CD4-positive, alpha-beta T cell (primary cell): ENCODE measurements at regions of chr13 and their contacts with region 1.

Region 1: GRCh38 chr13:101757446-101758039 is 305.1 kb downstream of the ITGBL1 start:
- DNase-seq: peak in 3 of 14 experiments; percentile 36 to 55 (median 44)
- ATAC-seq: no peak
- H3K4me3 ChIP-seq: no peak overlapping the region
- H3K4me3 Mint-ChIP-seq: no peak overlapping the region
- H3K27ac ChIP-seq: no peak overlapping the region
- H3K27ac Mint-ChIP-seq: no peak overlapping the region
- H3K4me1 ChIP-seq: no peaks in the 10 kb centered on the region
- H3K4me1 Mint-ChIP-seq: no peaks in the 10 kb centered on the region
- H3K27me3 ChIP-seq: no peaks in the 10 kb centered on the region
- H3K27me3 Mint-ChIP-seq: peaks cover 9% of the 10 kb centered on the region
- CTCF ChIP-seq: no peak

Region 2: GRCh38 chr13:101514788-101515187 is 242.8 kb before region 1 on chr13:
- CTCF ChIA-PET with region 1: no interaction called
- POLR2A ChIA-PET with region 1: no interaction called
- intact Hi-C with region 1: loop called (anchors 2 to 5 kb)
- DNase-seq: peak in 4 of 14 experiments; percentile 17 to 62 (median 59)
- ATAC-seq: no peak
- H3K4me3 ChIP-seq: no peak overlapping the region
- H3K4me3 Mint-ChIP-seq: no peak overlapping the region
- H3K27ac ChIP-seq: no peak overlapping the region
- H3K27ac Mint-ChIP-seq: no peak overlapping the region
- H3K4me1 ChIP-seq: no peaks in the 10 kb centered on the region
- H3K4me1 Mint-ChIP-seq: no peaks in the 10 kb centered on the region
- H3K27me3 ChIP-seq: no peaks in the 10 kb centered on the region
- H3K27me3 Mint-ChIP-seq: peaks cover 16% of the 10 kb centered on the region
- CTCF ChIP-seq: peak; percentile 56

Region 3: GRCh38 chr13:101773062-101773461 is 15.5 kb after region 1 on chr13:
- CTCF ChIA-PET with region 1: no interaction called
- POLR2A ChIA-PET with region 1: no interaction called
- intact Hi-C with region 1: no loop called
- DNase-seq: no peak
- ATAC-seq: no peak
- H3K4me3 ChIP-seq: no peak overlapping the region
- H3K4me3 Mint-ChIP-seq: no peak overlapping the region
- H3K27ac ChIP-seq: no peak overlapping the region
- H3K27ac Mint-ChIP-seq: no peak overlapping the region
- H3K4me1 ChIP-seq: no peaks in the 10 kb centered on the region
- H3K4me1 Mint-ChIP-seq: no peaks in the 10 kb centered on the region
- H3K27me3 ChIP-seq: no peaks in the 10 kb centered on the region
- H3K27me3 Mint-ChIP-seq: peaks cover 11% of the 10 kb centered on the region
- CTCF ChIP-seq: no peak